CD4-positive, alpha-beta T cell (primary cell): ENCODE measurements at regions of chr9 and their contacts with region 1.

Region 1: GRCh38 chr9:35481347-35481975 is 8.4 kb upstream of the RUSC2 start:
- DNase-seq: peak in 5 of 14 experiments; percentile 11 to 46 (median 25)
- ATAC-seq: peak; percentile 63
- H3K4me3 ChIP-seq: no peak overlapping the region
- H3K4me3 Mint-ChIP-seq: no peak overlapping the region
- H3K27ac ChIP-seq: no peak overlapping the region
- H3K27ac Mint-ChIP-seq: no peak overlapping the region
- H3K4me1 ChIP-seq: no peaks in the 10 kb centered on the region
- H3K4me1 Mint-ChIP-seq: no peaks in the 10 kb centered on the region
- H3K27me3 ChIP-seq: peaks cover 5 to 8% of the 10 kb centered on the region in 2 experiments
- H3K27me3 Mint-ChIP-seq: peaks cover 15% of the 10 kb centered on the region
- CTCF ChIP-seq: peak; percentile 31

Region 2: DNA sequence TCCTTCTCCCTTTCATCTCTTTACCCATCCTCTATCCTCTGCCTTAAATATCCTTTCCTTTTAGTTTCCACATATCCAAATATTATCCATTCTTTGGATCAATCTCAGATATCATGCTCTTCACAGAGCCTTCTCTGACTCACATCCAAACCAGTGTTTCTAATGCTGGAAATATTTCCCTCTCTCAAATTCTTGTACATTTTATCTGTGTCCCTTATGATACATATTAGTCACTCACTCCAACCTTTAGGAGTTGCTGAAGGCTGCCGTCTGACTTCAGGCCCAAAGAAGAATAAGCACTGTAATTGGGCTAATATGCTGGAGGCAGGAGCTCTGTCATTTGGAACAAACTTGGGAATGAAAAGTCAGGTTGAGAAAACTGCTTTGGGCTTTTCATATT is 147.9 kb before region 1 on chr9:
- CTCF ChIA-PET with region 1: no interaction called
- POLR2A ChIA-PET with region 1: no interaction called
- intact Hi-C with region 1: no loop called
- DNase-seq: no peak
- ATAC-seq: no peak
- H3K4me3 ChIP-seq: no peak overlapping the region
- H3K4me3 Mint-ChIP-seq: no peak overlapping the region
- H3K27ac ChIP-seq: no peak overlapping the region
- H3K27ac Mint-ChIP-seq: no peak overlapping the region
- H3K4me1 ChIP-seq: no peaks in the 10 kb centered on the region
- H3K4me1 Mint-ChIP-seq: no peaks in the 10 kb centered on the region
- H3K27me3 ChIP-seq: no peaks in the 10 kb centered on the region
- H3K27me3 Mint-ChIP-seq: no peaks in the 10 kb centered on the region
- CTCF ChIP-seq: no peak

Region 3: DNA sequence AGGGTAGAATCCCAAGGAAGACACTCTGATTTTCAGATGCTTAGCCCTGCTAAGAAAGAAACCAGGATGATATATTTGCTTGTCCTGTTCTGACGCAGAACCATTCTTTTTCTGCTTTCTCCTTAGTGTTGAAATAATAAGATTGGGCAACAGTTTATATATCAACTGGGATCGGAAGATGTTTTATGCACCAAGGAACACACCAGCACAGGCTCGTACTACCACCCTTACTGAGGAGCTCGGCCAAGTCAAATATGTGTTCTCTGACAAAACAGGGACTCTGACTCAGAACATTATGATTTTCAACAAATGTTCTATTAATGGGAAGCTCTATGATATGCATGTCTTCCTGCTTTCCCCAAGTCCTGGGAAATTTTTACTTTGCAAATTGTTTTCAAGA is 10.6 kb before region 1 on chr9:
- CTCF ChIA-PET with region 1: no interaction called
- POLR2A ChIA-PET with region 1: no interaction called
- intact Hi-C with region 1: no loop called
- DNase-seq: no peak
- ATAC-seq: no peak
- H3K4me3 ChIP-seq: no peak overlapping the region
- H3K4me3 Mint-ChIP-seq: no peak overlapping the region
- H3K27ac ChIP-seq: no peak overlapping the region
- H3K27ac Mint-ChIP-seq: no peak overlapping the region
- H3K4me1 ChIP-seq: no peaks in the 10 kb centered on the region
- H3K4me1 Mint-ChIP-seq: no peaks in the 10 kb centered on the region
- H3K27me3 ChIP-seq: no peaks in the 10 kb centered on the region
- H3K27me3 Mint-ChIP-seq: peaks cover 47% of the 10 kb centered on the region
- CTCF ChIP-seq: no peak

Region 4: DNA sequence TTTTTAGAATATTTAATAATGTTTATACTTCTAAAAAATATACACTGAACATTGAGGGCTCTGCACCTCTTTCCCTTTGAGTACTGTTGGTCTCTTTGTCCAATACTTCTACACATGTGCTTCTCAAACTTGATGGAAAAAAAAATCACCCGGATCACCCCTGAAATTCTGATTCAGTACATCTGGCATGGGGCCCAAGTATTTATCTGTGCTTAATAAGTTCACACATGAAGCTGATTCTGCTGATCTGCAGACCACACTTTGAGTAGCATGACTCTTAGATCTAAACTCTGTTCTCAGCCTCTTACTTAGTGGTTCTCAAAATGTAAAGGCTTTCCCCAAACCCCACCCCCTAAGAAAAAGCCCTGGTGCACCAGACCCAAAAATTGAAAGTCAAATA is 20.5 kb after region 1 on chr9:
- CTCF ChIA-PET with region 1: no interaction called
- POLR2A ChIA-PET with region 1: no interaction called
- intact Hi-C with region 1: no loop called
- DNase-seq: no peak
- ATAC-seq: no peak
- H3K4me3 ChIP-seq: no peak overlapping the region
- H3K4me3 Mint-ChIP-seq: no peak overlapping the region
- H3K27ac ChIP-seq: no peak overlapping the region
- H3K27ac Mint-ChIP-seq: no peak overlapping the region
- H3K4me1 ChIP-seq: no peaks in the 10 kb centered on the region
- H3K4me1 Mint-ChIP-seq: peaks cover 6% of the 10 kb centered on the region
- H3K27me3 ChIP-seq: no peaks in the 10 kb centered on the region
- H3K27me3 Mint-ChIP-seq: no peaks in the 10 kb centered on the region
- CTCF ChIP-seq: no peak

Region 5: GRCh38 chr9:35553670-35554543 is 72.4 kb after region 1 on chr9:
- CTCF ChIA-PET with region 1: no interaction called
- POLR2A ChIA-PET with region 1: no interaction called
- intact Hi-C with region 1: loop called (anchors 1 to 5 kb)
- DNase-seq: peak in 11 of 14 experiments; percentile 6 to 69 (median 14)
- ATAC-seq: peak; percentile 62
- H3K4me3 ChIP-seq: no peak overlapping the region
- H3K4me3 Mint-ChIP-seq: no peak overlapping the region
- H3K27ac ChIP-seq: no peak overlapping the region
- H3K27ac Mint-ChIP-seq: no peak overlapping the region
- H3K4me1 ChIP-seq: no peaks in the 10 kb centered on the region
- H3K4me1 Mint-ChIP-seq: no peaks in the 10 kb centered on the region
- H3K27me3 ChIP-seq: no peaks in the 10 kb centered on the region
- H3K27me3 Mint-ChIP-seq: no peaks in the 10 kb centered on the region
- CTCF ChIP-seq: peak; percentile 46

Region 6: GRCh38 chr9:35664531-35665470 is 183.3 kb after region 1 on chr9 and contains the start of gene ARHGEF39:
- CTCF ChIA-PET with region 1: no interaction called
- POLR2A ChIA-PET with region 1: no interaction called
- intact Hi-C with region 1: no loop called
- DNase-seq: peak in 12 of 14 experiments; percentile 35 to 84 (median 55)
- ATAC-seq: peak; percentile 74
- H3K4me3 ChIP-seq: peak within 1 kb of the TSS; percentile 61
- H3K4me3 Mint-ChIP-seq: peak within 1 kb of the TSS; percentile 85
- H3K27ac ChIP-seq: peak within 1 kb of the TSS; percentile 31 to 50
- H3K27ac Mint-ChIP-seq: peak within 1 kb of the TSS; percentile 85
- H3K4me1 ChIP-seq: peaks cover 61% of the 10 kb centered on the region
- H3K4me1 Mint-ChIP-seq: peaks cover 71% of the 10 kb centered on the region
- H3K27me3 ChIP-seq: no peaks in the 10 kb centered on the region
- H3K27me3 Mint-ChIP-seq: no peaks in the 10 kb centered on the region
- CTCF ChIP-seq: no peak
- total RNA-seq, gene ARHGEF39: 0.08 to 0.17 TPM